ENCODE measurements at regions of chrX and their contacts with region 1.

Region 1: DNA sequence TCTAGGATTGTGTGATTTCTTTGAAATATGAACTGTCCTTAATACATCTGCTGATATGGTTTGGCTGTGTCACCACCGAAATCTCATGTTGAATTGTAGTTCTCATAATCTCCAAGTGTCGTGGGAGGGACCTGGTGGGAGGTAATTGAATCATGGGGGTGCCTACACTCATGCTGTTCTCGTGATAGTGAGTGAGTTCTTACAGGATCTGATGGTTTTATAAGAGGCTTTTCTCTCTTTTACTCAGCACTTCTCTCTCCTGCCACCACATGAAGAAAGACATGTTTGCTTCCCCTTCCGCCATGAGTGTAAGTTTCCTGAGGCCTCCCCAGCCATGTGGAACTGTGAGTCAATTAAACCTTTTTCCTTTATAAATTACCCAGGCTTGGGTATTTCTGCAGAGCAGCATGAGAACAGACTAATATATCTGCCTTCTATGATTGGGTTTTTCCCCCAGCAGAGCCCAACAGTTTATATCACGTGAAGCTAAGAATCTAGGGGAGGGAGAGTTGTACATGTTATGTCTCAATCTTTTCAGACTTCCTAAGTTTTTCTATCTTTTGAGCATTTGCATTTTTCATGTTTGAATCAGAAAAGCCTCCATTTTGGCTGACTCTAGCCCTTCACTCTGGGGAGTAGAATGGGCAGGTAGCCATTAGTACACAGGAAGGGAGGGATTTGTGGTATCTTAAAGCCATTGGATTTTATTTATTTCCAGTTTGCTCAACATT is 58.9 kb downstream of the PLAC1 start:
- DNase-seq: peak; percentile 56
- H3K4me3 Mint-ChIP-seq: no peak overlapping the region
- H3K27ac Mint-ChIP-seq: peak overlapping the region; percentile 45
- H3K4me1 Mint-ChIP-seq: peaks cover 21% of the 10 kb centered on the region
- H3K27me3 Mint-ChIP-seq: peaks cover 11% of the 10 kb centered on the region

Region 2: DNA sequence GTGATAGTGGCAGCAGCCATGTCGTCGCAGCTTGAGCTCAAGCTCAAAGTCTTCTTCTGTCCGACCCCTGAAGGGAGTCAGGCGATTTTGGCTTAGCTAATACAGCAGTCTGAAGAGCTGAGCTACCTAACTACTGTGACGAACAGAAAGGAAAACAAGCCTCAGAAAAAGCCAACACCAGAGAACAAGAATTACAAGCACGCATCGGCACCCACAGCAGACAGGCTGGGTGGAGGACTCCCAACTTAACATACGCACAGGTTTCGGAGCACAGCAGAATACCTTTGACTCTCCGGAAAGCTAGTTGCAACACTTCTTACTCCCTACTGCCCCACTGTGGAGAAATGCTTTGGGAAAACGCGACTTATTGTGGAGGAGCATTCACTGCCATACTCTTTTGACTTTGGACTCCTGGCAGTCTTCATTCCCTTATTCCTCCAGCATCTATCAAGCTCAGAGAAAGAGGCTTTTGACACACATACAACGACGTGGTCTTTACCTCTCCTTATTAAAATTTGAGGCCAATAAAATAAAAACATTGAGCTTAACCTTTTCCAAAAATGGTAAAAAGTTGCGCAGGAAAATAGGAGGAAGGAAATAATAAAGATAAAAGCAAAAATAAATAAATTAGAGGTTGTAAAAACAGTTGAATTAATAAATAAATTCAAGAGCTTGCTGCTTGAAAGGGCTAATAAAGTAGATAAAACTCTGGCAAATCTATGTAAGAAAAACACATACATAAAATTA is 572.6 kb before region 1 on chrX:
- CTCF ChIA-PET with region 1: no interaction called
- POLR2A ChIA-PET with region 1: no interaction called
- intact Hi-C with region 1: no loop called
- DNase-seq: peak; percentile 26
- H3K4me3 Mint-ChIP-seq: no peak overlapping the region
- H3K27ac Mint-ChIP-seq: no peak overlapping the region
- H3K4me1 Mint-ChIP-seq: no peaks in the 10 kb centered on the region
- H3K27me3 Mint-ChIP-seq: no peaks in the 10 kb centered on the region

Region 3: GRCh38 chrX:134622056-134622812 is 22.9 kb after region 1 on chrX:
- CTCF ChIA-PET with region 1: no interaction called
- POLR2A ChIA-PET with region 1: interaction called, 3 read pairs
- intact Hi-C with region 1: loop called (anchors 1 kb)
- DNase-seq: peak; percentile 36
- H3K4me3 Mint-ChIP-seq: no peak overlapping the region
- H3K27ac Mint-ChIP-seq: no peak overlapping the region
- H3K4me1 Mint-ChIP-seq: peaks cover 22% of the 10 kb centered on the region
- H3K27me3 Mint-ChIP-seq: peaks cover 6% of the 10 kb centered on the region

Region 4: DNA sequence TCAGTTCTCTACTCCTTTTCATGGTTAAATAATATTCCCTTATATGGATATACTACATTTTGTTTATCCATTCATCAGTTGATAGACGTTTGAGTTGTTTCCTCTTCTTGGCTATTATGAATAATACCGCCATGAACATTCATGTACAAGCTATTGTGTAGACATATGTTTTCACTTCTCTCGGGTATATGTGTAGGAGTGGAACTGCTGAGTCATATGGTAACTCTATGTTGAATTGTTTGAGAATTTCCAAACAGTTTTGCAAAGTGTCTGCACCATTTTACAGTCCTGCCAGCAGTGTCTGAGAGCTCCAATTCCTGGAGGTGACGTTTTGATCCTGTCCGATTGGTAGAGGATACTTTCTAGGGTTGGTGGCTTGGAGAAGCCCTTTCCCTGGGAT is 35.3 kb after region 1 on chrX:
- CTCF ChIA-PET with region 1: no interaction called
- POLR2A ChIA-PET with region 1: no interaction called
- intact Hi-C with region 1: loop called (anchors 1 kb)
- DNase-seq: no peak
- H3K4me3 Mint-ChIP-seq: no peak overlapping the region
- H3K27ac Mint-ChIP-seq: no peak overlapping the region
- H3K4me1 Mint-ChIP-seq: peaks cover 8% of the 10 kb centered on the region
- H3K27me3 Mint-ChIP-seq: peaks cover 18% of the 10 kb centered on the region

Region 5: DNA sequence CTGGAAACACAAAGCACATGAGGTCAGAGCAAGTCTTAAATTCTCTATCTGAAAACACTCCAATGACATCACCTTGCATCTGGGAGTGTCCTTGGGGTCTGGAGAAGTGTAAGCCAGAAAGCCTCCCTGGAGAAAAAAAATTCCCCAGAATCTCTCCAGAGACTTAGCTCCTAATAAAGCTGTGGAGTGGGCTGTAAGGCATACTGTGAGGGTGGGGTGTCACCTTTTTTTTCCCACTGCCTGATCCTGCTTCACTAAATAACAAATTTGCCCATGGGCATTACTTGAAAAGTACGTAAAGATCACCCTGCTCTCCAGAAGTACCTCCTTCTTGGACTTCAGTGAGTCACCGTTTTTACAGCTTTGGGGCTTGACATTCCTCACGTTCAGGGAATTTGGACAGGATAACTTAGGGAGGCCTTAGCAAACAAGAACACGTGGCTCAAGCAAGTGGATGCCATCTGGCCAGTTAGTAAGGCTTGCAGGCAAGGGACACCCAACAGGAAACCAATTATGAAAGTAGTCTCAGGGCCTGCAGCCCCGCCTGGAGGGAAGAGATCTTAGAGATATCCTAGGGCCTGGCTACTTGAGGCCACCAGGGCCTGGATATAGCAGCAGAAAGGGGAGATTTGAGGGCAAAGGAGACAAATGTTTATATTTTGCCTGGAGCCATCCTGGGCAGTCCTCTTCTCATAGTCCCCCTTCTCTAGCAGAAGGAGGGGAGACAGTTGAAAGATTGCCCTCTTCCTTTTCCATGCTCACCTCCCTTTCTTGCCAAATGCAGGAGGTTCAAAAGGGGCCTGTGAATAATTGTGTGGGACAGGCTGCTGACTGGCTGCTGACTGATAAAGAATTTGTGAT is 119.0 kb after region 1 on chrX:
- CTCF ChIA-PET with region 1: no interaction called
- POLR2A ChIA-PET with region 1: no interaction called
- intact Hi-C with region 1: loop called (anchors 2 kb)
- DNase-seq: peak; percentile 9
- H3K4me3 Mint-ChIP-seq: no peak overlapping the region
- H3K27ac Mint-ChIP-seq: no peak overlapping the region
- H3K4me1 Mint-ChIP-seq: peaks cover 11% of the 10 kb centered on the region
- H3K27me3 Mint-ChIP-seq: peaks cover 3% of the 10 kb centered on the region

Region 6: GRCh38 chrX:134868771-134869495 is 269.6 kb after region 1 on chrX:
- CTCF ChIA-PET with region 1: no interaction called
- POLR2A ChIA-PET with region 1: no interaction called
- intact Hi-C with region 1: no loop called
- DNase-seq: no peak
- H3K4me3 Mint-ChIP-seq: no peak overlapping the region
- H3K27ac Mint-ChIP-seq: no peak overlapping the region
- H3K4me1 Mint-ChIP-seq: no peaks in the 10 kb centered on the region
- H3K27me3 Mint-ChIP-seq: no peaks in the 10 kb centered on the region

Measured in activated CD4-positive, alpha-beta memory T cell treated with anti-CD3 and anti-CD28 coated beads for 36 hours (primary cell).